ENCODE measurements at regions of chr2 and their contacts with region 1.

Region 1: DNA sequence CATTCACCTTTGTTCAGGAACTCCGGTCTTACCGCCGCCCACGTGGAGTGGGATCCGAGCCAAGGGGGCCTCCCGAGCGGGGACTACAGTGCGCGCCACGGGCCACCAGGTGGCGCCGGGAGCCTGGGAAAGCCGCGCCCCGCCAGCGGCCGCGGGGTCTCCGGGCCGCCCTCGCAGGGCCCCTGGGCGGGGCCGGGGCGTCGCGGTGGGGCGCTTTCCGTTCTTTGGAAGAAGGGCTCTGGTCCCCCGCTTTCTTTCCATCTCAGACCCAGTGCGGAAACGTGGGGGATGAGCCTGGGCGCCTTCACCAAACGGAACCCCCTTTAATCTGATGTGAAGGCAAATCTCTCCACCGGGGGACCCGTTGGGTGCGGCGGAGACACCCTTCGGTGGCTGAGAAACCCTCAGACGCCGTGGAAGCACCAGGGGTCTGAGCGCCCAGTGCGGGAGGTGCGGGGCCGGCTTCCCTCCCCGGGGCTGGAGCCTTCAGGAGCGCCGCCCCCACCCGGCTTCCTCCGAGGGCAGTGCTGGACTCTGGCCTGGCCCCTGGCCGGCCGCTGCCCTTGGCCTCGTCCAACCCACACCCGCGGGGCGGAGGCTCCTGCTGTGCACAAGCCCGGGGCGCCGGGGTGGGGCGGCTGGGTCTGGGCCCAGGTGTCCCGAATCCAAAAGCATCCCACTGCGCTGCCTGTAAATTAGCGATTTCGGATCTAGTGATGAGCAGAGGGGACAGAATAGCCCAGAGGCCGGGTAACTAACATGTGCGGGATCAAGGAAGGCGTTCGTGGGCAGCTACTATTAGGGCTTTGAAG is 44.6 kb downstream of the GORASP2 start:
- DNase-seq: peak; percentile 92
- H3K4me3 ChIP-seq: peak overlapping the region; percentile 61 to 86 (median 74)
- H3K27ac ChIP-seq: peak overlapping the region; percentile 80 to 89 (median 86)
- H3K4me1 ChIP-seq: peaks cover 0 to 18% (median 17%) of the 10 kb centered on the region in 4 donors
- H3K27me3 ChIP-seq: no peaks in the 10 kb centered on the region
- CTCF ChIP-seq: peak in 3 of 4 experiments; percentile 50 to 96 (median 59)
- EP300 ChIP-seq: no peak
- POLR2A ChIP-seq: no peak

Region 2: DNA sequence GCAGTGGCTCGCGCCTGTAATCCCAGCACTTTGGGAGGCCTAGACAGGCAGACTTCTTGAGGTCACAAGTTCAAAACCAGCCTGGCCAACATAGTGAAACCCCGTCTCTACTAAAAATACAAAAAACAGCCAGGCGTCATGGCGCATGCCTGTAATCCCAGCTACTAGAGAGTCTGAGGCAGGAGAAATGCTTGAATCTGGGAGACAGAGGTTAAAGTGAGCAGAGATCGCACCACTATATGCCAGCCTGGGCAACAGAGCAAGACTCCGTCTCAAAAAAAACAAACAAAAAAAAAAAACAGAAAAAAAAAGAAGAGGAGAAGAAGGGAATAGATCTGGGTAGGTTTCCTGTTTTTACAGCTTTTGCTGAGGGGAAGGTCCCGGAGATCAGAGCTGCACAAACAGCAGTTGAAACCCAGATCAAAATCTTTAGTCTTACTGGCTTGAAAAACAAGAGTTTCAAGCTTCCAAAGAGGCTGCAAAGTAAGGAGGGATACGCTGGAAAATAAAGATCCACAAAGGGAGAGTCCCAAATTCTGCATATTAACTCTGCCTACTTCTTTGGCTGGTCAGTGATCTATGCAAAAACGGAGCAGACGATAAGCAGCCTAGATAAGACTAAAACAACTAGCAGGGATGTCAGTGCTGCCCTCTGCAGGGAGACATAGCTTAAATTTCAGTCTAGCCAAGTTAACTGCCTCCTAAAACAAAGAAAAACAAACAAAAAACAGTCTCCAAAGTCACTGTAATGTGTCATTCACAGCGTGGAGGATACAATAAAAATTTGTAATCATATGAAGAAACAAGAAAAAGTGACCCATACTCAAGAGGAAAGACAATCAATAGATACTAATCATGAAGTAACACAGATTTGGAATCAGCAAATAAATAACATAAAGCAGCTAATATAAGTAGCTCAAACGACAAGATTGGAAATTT is 112.9 kb after region 1 on chr2:
- intact Hi-C with region 1: loop called (anchors 5 kb)
- DNase-seq: no peak
- H3K4me3 ChIP-seq: no peak overlapping the region
- H3K27ac ChIP-seq: no peak overlapping the region
- H3K4me1 ChIP-seq: peaks cover 0 to 25% (median 17%) of the 10 kb centered on the region in 4 donors
- H3K27me3 ChIP-seq: no peaks in the 10 kb centered on the region
- CTCF ChIP-seq: peak in 3 of 4 experiments; percentile 22 to 33 (median 22)
- EP300 ChIP-seq: no peak
- POLR2A ChIP-seq: no peak

Region 3: DNA sequence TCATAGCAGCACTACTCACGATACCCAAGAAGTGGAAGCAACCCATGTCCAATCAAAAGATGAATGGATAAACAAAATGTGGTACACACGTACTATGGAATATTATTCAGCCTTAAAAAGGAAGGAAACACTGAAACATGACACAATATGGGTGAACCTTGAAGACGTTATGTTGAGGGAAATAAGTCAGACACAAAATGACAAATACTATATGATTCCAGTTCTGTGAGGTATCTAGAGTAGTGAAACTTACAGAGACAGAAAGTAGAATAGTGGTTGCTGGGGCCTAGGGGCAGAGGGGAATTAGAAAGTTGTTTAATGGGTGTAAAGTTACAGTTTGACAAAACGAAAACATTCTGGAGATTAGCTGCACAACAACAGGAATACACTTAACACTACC is 162.3 kb after region 1 on chr2:
- intact Hi-C with region 1: no loop called
- DNase-seq: no peak
- H3K4me3 ChIP-seq: no peak overlapping the region
- H3K27ac ChIP-seq: no peak overlapping the region
- H3K4me1 ChIP-seq: peaks cover 0 to 73% (median 43%) of the 10 kb centered on the region in 4 donors
- H3K27me3 ChIP-seq: no peaks in the 10 kb centered on the region
- CTCF ChIP-seq: no peak
- EP300 ChIP-seq: no peak
- POLR2A ChIP-seq: no peak

Region 4: GRCh38 chr2:171416009-171416926 is 442.6 kb after region 1 on chr2:
- intact Hi-C with region 1: loop called (anchors 1 kb)
- DNase-seq: peak; percentile 94
- H3K4me3 ChIP-seq: no peak overlapping the region
- H3K27ac ChIP-seq: peak overlapping the region; percentile 62 to 77 (median 66)
- H3K4me1 ChIP-seq: peaks cover 0 to 29% (median 13%) of the 10 kb centered on the region in 4 donors
- H3K27me3 ChIP-seq: no peaks in the 10 kb centered on the region
- CTCF ChIP-seq: peak; percentile 76 to 81 (median 78)
- EP300 ChIP-seq: no peak
- POLR2A ChIP-seq: no peak

Region 5: DNA sequence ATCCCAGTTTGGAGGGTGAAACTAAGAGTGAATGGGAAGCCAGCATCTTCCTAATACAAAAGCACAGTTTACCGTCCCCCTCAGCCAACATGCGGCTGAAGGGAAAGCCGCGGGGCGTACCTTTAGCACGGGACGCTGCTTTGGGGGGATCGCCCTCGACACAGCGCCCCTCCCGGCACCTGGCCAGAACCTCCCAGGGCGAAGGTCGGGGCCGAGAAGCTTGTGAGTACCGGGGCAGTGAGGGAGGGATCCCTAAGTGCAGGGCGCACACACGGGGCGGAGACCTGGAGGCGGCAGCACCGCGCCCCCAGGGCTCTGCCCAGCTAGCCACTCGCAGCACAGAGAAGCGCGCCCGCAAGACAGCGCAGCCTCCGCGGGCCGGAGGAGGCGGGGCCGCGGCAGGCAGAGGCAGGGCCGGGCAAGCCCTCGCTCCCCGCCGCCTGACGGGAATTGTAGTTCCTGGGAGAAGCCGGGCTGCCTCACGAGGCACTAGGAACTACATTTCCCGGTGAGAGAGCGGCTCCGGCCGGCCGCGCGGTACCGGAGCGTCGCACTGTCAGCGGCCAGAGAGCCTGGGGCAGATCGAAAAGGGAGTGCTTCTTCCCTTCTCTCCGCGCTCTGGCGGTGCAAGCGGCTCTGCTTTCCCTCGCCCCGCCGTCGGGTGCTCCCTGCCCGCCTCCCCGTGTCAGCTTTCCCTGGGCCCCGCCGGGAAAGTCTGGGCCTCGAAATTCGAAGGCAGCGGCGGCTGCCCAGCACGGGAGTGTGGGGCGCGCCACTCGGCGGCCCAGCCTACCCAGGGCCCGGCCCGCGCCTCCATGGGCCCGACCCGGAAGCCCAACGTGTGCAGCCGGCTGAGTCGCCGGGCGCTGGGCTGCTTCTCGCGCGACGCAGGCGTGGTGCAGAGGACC is 460.3 kb after region 1 on chr2 and contains the starts of genes DCAF17 and METTL8:
- intact Hi-C with region 1: loop called (anchors 1 kb)
- DNase-seq: peak; percentile 97
- H3K4me3 ChIP-seq: peak within 1 kb of the TSS; percentile 60 to 88 (median 78)
- H3K27ac ChIP-seq: peak within 1 kb of the TSS; percentile 88 to 99 (median 97)
- H3K4me1 ChIP-seq: peaks cover 0 to 46% (median 33%) of the 10 kb centered on the region in 4 donors
- H3K27me3 ChIP-seq: no peaks in the 10 kb centered on the region
- CTCF ChIP-seq: peak in 1 of 4 experiments; percentile 11
- EP300 ChIP-seq: no peak
- POLR2A ChIP-seq: peak in 1 of 2 donors; percentile 59
- total RNA-seq, gene DCAF17: 19.1 to 27.5 (median 21.9) TPM
- total RNA-seq, gene METTL8: 30.1 to 42.7 (median 40.2) TPM

Region 6: GRCh38 chr2:171522052-171522787 is 548.5 kb after region 1 on chr2 and contains the start of gene CYBRD1:
- intact Hi-C with region 1: loop called (anchors 5 kb)
- DNase-seq: peak; percentile 96
- H3K4me3 ChIP-seq: peak within 1 kb of the TSS; percentile 83 to 99 (median 93)
- H3K27ac ChIP-seq: peak within 1 kb of the TSS; percentile 93 to 98 (median 95)
- H3K4me1 ChIP-seq: peaks cover 0 to 26% (median 21%) of the 10 kb centered on the region in 4 donors
- H3K27me3 ChIP-seq: no peaks in the 10 kb centered on the region
- CTCF ChIP-seq: no peak
- EP300 ChIP-seq: peak in 1 of 4 donors; percentile 56
- POLR2A ChIP-seq: peak; percentile 58 to 72
- total RNA-seq, gene CYBRD1: 119 to 250 (median 197) TPM